Transverse colon (tissue), 4 donors: ENCODE measurements at regions of chr16 and their contacts with region 1.

Region 1: GRCh38 chr16:63625126-63625525 is 1496.7 kb downstream of the CDH11 start:
- DNase-seq: no peak
- H3K4me3 ChIP-seq: no peak overlapping the region
- H3K27ac ChIP-seq: no peak overlapping the region
- H3K4me1 ChIP-seq: no peaks in the 10 kb centered on the region
- H3K27me3 ChIP-seq: no peaks in the 10 kb centered on the region
- CTCF ChIP-seq: no peak
- EP300 ChIP-seq: no peak
- POLR2A ChIP-seq: no peak

Region 2: DNA sequence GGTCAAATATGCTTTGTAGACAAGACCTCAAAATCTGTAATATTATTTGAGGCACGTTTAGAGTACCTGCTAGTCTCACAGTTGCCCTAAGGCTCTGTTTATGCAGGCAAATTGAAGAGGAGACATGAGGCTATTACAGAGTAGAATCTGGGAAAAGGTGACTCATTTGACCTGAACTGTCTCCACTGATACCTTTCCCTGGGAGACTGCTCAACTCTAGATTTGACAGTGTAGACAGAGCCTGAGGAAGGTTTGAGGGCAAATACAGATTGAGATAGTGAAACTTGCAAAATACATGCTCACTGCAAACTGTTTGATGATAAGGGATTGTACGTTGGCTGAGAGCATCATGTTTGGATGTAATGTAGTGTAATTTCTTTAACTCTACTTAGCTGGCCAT is 322.3 kb before region 1 on chr16:
- in situ Hi-C with region 1: no loop called
- intact Hi-C with region 1: no loop called
- DNase-seq: no peak
- H3K4me3 ChIP-seq: no peak overlapping the region
- H3K27ac ChIP-seq: no peak overlapping the region
- H3K4me1 ChIP-seq: no peaks in the 10 kb centered on the region
- H3K27me3 ChIP-seq: no peaks in the 10 kb centered on the region
- CTCF ChIP-seq: no peak
- EP300 ChIP-seq: no peak
- POLR2A ChIP-seq: no peak

Region 3: GRCh38 chr16:63602206-63602927 is 22.8 kb before region 1 on chr16:
- in situ Hi-C with region 1: no loop called
- intact Hi-C with region 1: loop called (anchors 2 kb)
- DNase-seq: no peak
- H3K4me3 ChIP-seq: no peak overlapping the region
- H3K27ac ChIP-seq: no peak overlapping the region
- H3K4me1 ChIP-seq: no peaks in the 10 kb centered on the region
- H3K27me3 ChIP-seq: no peaks in the 10 kb centered on the region
- CTCF ChIP-seq: no peak
- EP300 ChIP-seq: no peak
- POLR2A ChIP-seq: no peak